Activated CD8-positive, alpha-beta T cell treated with anti-CD3 and anti-CD28 coated beads for 36 hours (primary cell): ENCODE measurements at regions of chr14 and their contacts with region 1.

Region 1: DNA sequence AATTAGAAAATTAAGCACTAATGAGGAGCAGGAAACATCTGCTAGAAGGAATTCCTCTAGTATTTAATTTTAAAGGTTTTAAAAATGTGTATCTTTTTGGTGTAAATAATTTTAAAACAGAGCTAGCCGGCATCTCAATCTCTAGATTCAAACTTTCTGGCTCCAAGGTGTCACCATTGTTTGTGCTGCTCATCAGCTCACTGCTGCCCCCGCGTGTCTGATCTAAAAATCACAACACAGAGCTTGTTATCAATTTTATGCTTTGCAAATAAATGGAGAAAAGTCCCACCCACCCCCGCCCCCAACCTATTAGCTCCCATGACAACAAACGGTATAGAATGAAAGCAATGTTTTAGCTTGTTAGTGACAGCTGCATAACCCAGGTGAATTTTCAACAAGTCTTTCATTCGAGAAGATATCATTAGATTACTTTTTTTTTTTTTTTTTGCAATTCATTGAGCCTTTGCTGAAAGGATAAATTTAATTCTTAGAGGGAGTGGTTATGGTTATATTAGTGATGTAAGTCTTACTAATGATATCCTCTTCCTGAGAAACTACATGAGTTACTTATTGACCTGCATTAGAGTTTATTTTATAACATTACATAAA is 11.3 kb upstream of the ABHD12B start:
- DNase-seq: peak; percentile 97
- ATAC-seq: peak; percentile 79
- H3K4me3 Mint-ChIP-seq: peak overlapping the region; percentile 79
- H3K27ac Mint-ChIP-seq: peak overlapping the region; percentile 78
- H3K4me1 Mint-ChIP-seq: peaks cover 10% of the 10 kb centered on the region
- H3K27me3 Mint-ChIP-seq: no peaks in the 10 kb centered on the region
- CTCF ChIP-seq: peak; percentile 91

Region 2: GRCh38 chr14:50619556-50620141 is 240.9 kb before region 1 on chr14:
- CTCF ChIA-PET with region 1: interaction called, 11 read pairs
- POLR2A ChIA-PET with region 1: no interaction called
- intact Hi-C with region 1: no loop called
- DNase-seq: no peak
- ATAC-seq: peak; percentile 53
- H3K4me3 Mint-ChIP-seq: no peak overlapping the region
- H3K27ac Mint-ChIP-seq: no peak overlapping the region
- H3K4me1 Mint-ChIP-seq: peaks cover 3% of the 10 kb centered on the region
- H3K27me3 Mint-ChIP-seq: no peaks in the 10 kb centered on the region
- CTCF ChIP-seq: peak; percentile 31

Region 3: DNA sequence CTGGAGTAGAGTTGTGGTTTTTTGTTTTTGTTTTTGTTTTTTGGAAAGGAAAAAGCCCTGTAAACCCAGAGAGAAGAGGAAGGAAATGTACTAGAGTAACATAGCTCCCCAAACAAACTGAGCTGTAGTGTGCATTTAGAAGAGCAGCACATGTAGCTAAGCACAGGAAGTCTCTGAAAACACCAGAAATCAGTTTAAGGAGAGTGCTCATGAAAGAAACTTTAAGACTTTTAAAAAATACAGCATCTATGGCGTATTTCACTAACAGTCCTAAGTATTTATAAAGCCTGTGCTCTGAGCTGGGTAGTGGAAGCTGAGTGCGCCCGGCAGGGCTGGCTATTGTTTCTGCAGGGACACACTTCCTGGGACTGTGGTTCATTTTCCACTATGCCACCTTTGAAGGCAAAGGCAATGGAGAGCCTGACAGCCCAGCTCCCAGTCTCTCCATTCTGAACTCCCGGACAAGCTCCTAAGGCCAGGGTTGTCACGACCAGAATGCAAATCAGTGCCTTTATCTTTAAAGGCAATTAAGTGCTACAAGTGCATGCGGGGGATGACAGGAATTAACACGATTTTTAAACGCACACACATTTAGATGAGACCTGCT is 75.0 kb before region 1 on chr14:
- CTCF ChIA-PET with region 1: interaction called, 71 read pairs
- POLR2A ChIA-PET with region 1: interaction called, 20 read pairs
- intact Hi-C with region 1: loop called (anchors 5 kb)
- DNase-seq: no peak
- ATAC-seq: no peak
- H3K4me3 Mint-ChIP-seq: no peak overlapping the region
- H3K27ac Mint-ChIP-seq: peak overlapping the region; percentile 77
- H3K4me1 Mint-ChIP-seq: peaks cover 89% of the 10 kb centered on the region
- H3K27me3 Mint-ChIP-seq: no peaks in the 10 kb centered on the region
- CTCF ChIP-seq: no peak

Region 4: GRCh38 chr14:50813544-50813863 is 47.1 kb before region 1 on chr14:
- CTCF ChIA-PET with region 1: interaction called, 11 read pairs
- POLR2A ChIA-PET with region 1: no interaction called
- intact Hi-C with region 1: no loop called
- DNase-seq: no peak
- ATAC-seq: peak; percentile 70
- H3K4me3 Mint-ChIP-seq: peak overlapping the region; percentile 78
- H3K27ac Mint-ChIP-seq: peak overlapping the region; percentile 99
- H3K4me1 Mint-ChIP-seq: peaks cover 61% of the 10 kb centered on the region
- H3K27me3 Mint-ChIP-seq: no peaks in the 10 kb centered on the region
- CTCF ChIP-seq: no peak

Region 5: DNA sequence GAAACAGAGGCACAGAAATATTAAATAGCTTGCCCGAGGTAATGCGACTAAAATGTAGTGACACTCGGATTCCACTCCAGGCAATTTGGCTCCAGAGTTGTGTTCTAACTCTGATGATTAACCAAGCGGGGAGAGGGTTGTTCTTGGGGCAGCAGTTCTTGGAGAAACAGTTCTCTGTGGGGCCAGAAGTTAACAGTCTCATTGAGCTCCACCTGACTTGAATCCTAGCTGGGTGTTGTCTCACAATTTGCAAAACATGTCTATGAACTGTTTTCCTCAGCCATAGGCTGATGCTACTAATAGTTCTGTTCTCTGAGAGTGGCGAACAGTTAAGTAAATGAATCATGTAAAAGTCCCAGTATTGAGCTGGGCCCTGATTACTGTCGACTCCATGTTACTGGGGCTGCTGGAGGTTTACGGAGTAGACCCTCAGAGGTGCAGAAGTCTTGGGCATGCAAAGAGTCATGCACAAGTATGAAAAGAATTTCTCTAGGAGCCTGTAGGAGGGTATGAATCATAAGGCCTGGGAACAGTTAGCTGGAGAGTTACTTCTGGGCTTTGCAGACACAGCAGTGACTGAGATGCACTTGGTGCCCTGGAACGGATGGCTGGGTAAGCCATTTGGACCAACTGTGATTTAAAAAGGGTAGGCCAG is 14.2 kb before region 1 on chr14:
- CTCF ChIA-PET with region 1: interaction called, 28 read pairs
- POLR2A ChIA-PET with region 1: interaction called, 5 read pairs
- intact Hi-C with region 1: no loop called
- DNase-seq: no peak
- ATAC-seq: no peak
- H3K4me3 Mint-ChIP-seq: no peak overlapping the region
- H3K27ac Mint-ChIP-seq: no peak overlapping the region
- H3K4me1 Mint-ChIP-seq: peaks cover 5% of the 10 kb centered on the region
- H3K27me3 Mint-ChIP-seq: no peaks in the 10 kb centered on the region
- CTCF ChIP-seq: no peak

Region 6: DNA sequence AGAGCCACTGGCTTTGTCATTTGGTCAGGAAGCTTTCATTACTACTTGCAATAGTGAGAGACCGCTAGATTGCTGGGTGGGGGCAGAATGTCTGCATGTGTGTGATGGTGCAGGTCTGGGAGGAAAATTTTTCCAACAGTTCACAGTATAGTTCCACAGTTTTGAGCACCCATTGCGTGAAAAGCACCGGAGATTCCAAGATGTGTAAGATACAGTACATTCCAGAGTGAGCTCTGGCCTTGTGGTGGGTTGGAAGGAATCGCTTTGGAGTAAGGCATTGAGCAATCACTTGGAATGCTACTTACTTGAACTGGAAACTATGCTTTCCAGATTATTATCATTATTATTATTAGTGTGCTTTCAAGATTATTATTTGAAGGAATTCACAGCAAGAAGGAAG is 743.5 kb after region 1 on chr14:
- CTCF ChIA-PET with region 1: no interaction called
- POLR2A ChIA-PET with region 1: no interaction called
- intact Hi-C with region 1: no loop called
- DNase-seq: no peak
- ATAC-seq: no peak
- H3K4me3 Mint-ChIP-seq: no peak overlapping the region
- H3K27ac Mint-ChIP-seq: no peak overlapping the region
- H3K4me1 Mint-ChIP-seq: no peaks in the 10 kb centered on the region
- H3K27me3 Mint-ChIP-seq: peaks cover 15% of the 10 kb centered on the region
- CTCF ChIP-seq: no peak